ENCODE measurements at regions of chr16 and their contacts with region 1.

Region 1: GRCh38 chr16:27867122-27868110 is 196.1 kb downstream of the GSG1L start:
- DNase-seq: peak; percentile 78
- H3K4me3 ChIP-seq: no peak overlapping the region
- H3K27ac ChIP-seq: no peak overlapping the region
- H3K4me1 ChIP-seq: no peaks in the 10 kb centered on the region
- H3K27me3 ChIP-seq: no peaks in the 10 kb centered on the region
- CTCF ChIP-seq: peak; percentile 54 to 84
- POLR2A ChIP-seq: no peak

Region 2: GRCh38 chr16:27600381-27600780 is 267.0 kb before region 1 on chr16:
- CTCF ChIA-PET with region 1: interaction called, 6 read pairs
- POLR2A ChIA-PET with region 1: no interaction called
- dilution Hi-C with region 1: no loop called
- intact Hi-C with region 1: loop called (anchors 1 kb)
- DNase-seq: no peak
- H3K4me3 ChIP-seq: no peak overlapping the region
- H3K27ac ChIP-seq: no peak overlapping the region
- H3K4me1 ChIP-seq: no peaks in the 10 kb centered on the region
- H3K27me3 ChIP-seq: no peaks in the 10 kb centered on the region
- CTCF ChIP-seq: no peak
- POLR2A ChIP-seq: no peak

Region 3: DNA sequence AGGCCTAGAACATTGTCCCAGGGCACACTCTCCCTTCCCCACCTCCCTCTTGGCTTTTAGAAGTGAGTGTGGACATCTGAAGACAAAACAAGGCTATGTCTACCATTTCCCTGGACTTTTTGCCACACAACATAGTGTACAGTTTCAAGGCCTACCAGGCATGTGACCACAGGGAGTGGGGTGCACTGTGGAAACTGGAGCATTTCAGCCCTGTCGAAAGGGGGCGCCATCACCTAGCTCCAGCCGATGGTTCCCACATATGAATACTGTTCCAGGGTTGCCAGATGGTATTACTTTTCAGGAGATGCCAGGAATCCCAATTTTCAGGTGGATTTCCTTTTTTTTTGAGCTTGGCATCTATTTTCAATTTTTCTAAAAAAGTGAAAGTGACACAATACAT is 176.8 kb before region 1 on chr16:
- CTCF ChIA-PET with region 1: interaction called, 33 read pairs
- POLR2A ChIA-PET with region 1: no interaction called
- dilution Hi-C with region 1: no loop called
- intact Hi-C with region 1: loop called (anchors 1 kb)
- DNase-seq: peak; percentile 28
- H3K4me3 ChIP-seq: no peak overlapping the region
- H3K27ac ChIP-seq: no peak overlapping the region
- H3K4me1 ChIP-seq: no peaks in the 10 kb centered on the region
- H3K27me3 ChIP-seq: no peaks in the 10 kb centered on the region
- CTCF ChIP-seq: peak; percentile 65 to 71
- POLR2A ChIP-seq: no peak

Region 4: GRCh38 chr16:27759301-27759871 is 108.0 kb before region 1 on chr16:
- CTCF ChIA-PET with region 1: interaction called, 4 read pairs
- POLR2A ChIA-PET with region 1: no interaction called
- dilution Hi-C with region 1: no loop called
- intact Hi-C with region 1: loop called (anchors 1 kb)
- DNase-seq: peak; percentile 58
- H3K4me3 ChIP-seq: no peak overlapping the region
- H3K27ac ChIP-seq: peak overlapping the region; percentile 62
- H3K4me1 ChIP-seq: peaks cover 11% of the 10 kb centered on the region
- H3K27me3 ChIP-seq: no peaks in the 10 kb centered on the region
- CTCF ChIP-seq: no peak
- POLR2A ChIP-seq: no peak

Region 5: DNA sequence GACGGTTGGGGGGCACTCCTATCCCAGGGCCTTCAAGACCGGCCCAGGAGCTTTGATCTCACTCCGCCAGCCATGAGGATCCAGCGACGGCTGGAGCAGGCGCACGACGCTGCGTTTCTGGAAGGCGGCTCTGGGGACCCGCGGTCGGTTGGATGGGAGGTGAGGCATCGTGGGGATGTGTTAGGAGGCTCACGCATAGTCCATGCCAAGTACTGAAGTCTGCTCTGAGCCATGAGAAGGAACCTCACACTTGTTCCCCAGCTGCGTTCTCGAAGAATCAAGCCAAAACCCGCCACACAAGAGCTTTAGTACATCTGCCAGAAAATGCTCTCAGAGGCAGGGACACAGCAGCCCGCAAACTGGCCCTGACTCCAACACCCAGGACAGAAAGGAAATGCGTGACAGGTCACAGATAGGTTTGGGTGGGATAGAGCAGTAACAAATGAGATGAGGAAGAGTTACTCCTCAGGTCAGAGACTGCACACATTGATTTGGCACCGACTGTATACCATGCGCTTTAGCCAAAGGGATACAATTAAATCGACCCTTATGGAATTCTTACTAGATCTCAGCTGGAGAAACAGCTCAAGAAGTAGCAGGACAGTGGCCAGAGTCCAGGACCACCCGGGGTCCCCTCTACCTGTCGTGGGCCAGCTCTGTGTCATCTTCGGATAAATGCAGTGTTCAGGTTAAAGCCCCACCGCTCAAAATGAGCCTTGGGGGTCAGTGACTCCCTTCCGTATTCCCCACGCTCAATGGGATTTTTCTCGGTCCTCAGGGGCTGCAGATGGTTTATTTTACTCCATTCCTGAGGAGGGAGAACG is 202.8 kb after region 1 on chr16:
- CTCF ChIA-PET with region 1: interaction called, 6 read pairs
- POLR2A ChIA-PET with region 1: no interaction called
- dilution Hi-C with region 1: no loop called
- intact Hi-C with region 1: loop called (anchors 1 kb)
- DNase-seq: no peak
- H3K4me3 ChIP-seq: no peak overlapping the region
- H3K27ac ChIP-seq: no peak overlapping the region
- H3K4me1 ChIP-seq: no peaks in the 10 kb centered on the region
- H3K27me3 ChIP-seq: peaks cover 0 to 6% of the 10 kb centered on the region in 2 experiments
- CTCF ChIP-seq: no peak
- POLR2A ChIP-seq: no peak

Measured in endothelial cell of umbilical vein (primary cell).